Caco-2 (cell line): ENCODE measurements at regions of chr19 and their contacts with region 1.

Region 1: DNA sequence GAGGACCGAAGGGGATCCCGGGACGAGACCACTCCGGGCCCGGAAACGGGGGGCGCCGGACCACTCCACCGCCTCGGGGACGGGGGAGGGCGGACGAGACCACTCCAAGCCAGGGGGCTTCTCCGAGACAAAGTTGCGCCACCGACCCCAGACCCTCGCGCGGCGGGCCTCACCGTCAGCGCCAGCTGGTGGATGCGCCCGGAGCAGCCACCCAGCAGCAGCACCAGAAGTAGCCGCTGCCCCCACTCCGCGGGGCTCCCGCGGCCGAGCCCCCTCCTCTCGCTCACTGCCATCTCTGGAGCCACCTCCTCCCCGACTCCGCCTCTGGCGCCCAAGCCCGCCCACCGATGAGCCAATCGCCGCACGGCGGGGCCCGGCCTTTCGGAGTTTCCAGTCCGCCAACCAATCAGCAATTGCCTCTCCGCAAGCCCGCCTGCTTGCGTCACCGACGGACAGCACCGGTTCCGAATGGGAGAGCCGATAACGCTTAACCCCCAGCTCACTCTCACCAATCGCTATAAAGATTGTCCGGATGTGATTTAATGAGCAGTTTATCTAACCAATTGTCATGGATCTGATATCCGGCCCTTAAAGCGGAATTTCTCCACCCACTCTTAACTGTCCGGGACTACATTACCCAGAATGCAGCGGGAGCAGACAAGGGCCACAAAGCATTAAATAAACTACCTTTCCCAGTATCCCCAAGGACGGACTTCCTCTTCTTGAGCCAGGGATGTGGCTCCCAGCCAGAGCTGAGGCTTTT is at the start of gene GPR108:
- DNase-seq: peak; percentile 99
- H3K4me3 ChIP-seq: peak within 1 kb of the TSS; percentile 81
- H3K4me3 Mint-ChIP-seq: peak within 1 kb of the TSS; percentile 78
- H3K27ac Mint-ChIP-seq: peak within 1 kb of the TSS; percentile 99
- H3K4me1 ChIP-seq: peaks cover 20% of the 10 kb centered on the region
- H3K4me1 Mint-ChIP-seq: peaks cover 17% of the 10 kb centered on the region
- H3K27me3 ChIP-seq: no peaks in the 10 kb centered on the region
- H3K27me3 Mint-ChIP-seq: no peaks in the 10 kb centered on the region
- CTCF ChIP-seq: no peak
- total RNA-seq, gene GPR108: 48.9 and 53.6 TPM in 2 replicates

Region 2: DNA sequence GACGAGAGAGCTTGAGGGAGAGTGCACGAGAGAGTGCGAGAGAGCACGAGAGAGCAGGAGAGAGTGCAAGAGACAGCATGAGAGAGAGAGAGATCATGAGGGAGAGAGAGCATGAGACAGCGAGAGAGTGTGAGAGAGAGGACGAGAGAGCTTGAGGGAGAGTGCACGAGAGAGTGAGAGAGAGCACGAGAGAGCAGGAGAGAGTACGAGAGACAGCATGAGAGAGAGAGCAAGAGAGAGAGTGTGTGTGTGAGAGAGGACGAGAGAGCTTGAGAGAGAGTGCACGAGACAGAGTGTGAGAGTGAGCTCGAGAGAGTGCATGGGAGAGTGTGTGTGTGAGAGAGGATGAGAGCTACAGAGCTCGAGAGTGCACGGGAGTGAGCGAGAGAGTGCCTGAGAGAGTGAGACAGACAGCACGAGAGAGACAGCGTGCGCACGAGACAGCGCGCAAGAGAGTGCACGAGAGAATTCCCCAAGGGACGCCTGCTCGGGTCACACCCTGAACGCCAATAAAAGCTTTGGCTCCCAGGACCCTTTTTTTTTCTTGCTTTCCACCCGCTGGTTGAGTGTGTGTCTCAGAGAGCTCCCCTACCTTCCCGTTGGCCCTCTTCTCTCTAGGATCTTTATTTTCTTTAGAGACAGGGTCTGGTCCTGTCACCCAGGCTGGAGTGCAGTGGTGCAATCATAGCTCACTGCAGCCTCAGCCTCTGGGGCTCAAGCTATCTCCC is 150.2 kb before region 1 on chr19:
- CTCF ChIA-PET with region 1: no interaction called
- POLR2A ChIA-PET with region 1: interaction called, 14 read pairs
- intact Hi-C with region 1: no loop called
- DNase-seq: peak in 1 of 2 experiments; percentile 20
- H3K4me3 ChIP-seq: peak overlapping the region; percentile 42
- H3K4me3 Mint-ChIP-seq: peak overlapping the region; percentile 81
- H3K27ac Mint-ChIP-seq: no peak overlapping the region
- H3K4me1 ChIP-seq: no peaks in the 10 kb centered on the region
- H3K4me1 Mint-ChIP-seq: peaks cover 9% of the 10 kb centered on the region
- H3K27me3 ChIP-seq: peaks cover 2% of the 10 kb centered on the region; the same call in 1 of the 2 replicates
- H3K27me3 Mint-ChIP-seq: peaks cover 28% of the 10 kb centered on the region
- CTCF ChIP-seq: no peak

Region 3: GRCh38 chr19:6660930-6661329 is 76.5 kb before region 1 on chr19:
- CTCF ChIA-PET with region 1: interaction called, 9 read pairs
- POLR2A ChIA-PET with region 1: no interaction called
- intact Hi-C with region 1: loop called (anchors 1 kb)
- DNase-seq: peak in 1 of 2 experiments; percentile 32
- H3K4me3 ChIP-seq: no peak overlapping the region
- H3K4me3 Mint-ChIP-seq: peak overlapping the region; percentile 42
- H3K27ac Mint-ChIP-seq: no peak overlapping the region
- H3K4me1 ChIP-seq: peaks cover 17% of the 10 kb centered on the region
- H3K4me1 Mint-ChIP-seq: peaks cover 27% of the 10 kb centered on the region
- H3K27me3 ChIP-seq: no peaks in the 10 kb centered on the region
- H3K27me3 Mint-ChIP-seq: no peaks in the 10 kb centered on the region
- CTCF ChIP-seq: no peak

Region 4: DNA sequence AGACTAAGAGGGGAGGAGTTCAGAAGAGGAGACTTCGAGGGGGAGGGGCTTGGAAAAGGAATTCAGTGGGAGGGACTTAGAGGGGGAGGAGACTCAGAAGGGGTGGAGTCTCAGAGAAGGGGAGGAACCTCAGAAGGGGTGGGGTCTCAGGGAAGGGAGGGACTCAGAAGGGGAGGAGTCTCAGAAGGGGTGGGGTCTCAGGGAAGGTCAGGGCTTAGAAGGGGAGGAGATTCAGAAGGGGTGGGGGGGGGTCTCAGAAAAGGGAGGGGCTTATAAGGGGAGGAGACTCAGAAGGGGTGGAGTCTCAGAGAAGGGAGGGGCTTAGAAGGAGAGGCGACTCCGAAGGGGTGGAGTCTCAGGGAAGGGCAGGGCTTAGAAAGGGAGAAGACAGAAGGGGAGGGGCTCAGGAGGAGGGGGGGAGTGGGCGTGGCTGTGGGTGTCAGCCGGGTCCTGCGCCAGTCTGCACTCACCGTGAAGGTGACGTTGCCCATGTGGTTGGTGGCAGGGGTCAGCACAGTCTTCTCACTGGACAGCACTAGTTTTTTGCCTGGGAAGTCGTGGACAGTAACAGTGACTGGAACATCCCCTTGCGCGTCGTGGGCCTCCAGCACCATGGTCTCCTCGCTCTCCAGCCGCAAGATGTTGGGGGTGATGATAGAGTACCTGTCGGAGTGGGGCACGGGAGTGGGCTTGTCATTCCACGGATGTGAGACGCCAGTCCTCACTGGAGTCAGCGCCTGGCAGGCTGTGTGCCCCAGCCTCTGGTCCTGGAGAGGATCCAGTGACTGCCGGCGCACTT is 18.5 kb before region 1 on chr19:
- CTCF ChIA-PET with region 1: no interaction called
- POLR2A ChIA-PET with region 1: no interaction called
- intact Hi-C with region 1: no loop called
- DNase-seq: peak in 1 of 2 experiments; percentile 37
- H3K4me3 ChIP-seq: no peak overlapping the region
- H3K4me3 Mint-ChIP-seq: no peak overlapping the region
- H3K27ac Mint-ChIP-seq: no peak overlapping the region
- H3K4me1 ChIP-seq: peaks cover 11% of the 10 kb centered on the region
- H3K4me1 Mint-ChIP-seq: peaks cover 17% of the 10 kb centered on the region
- H3K27me3 ChIP-seq: no peaks in the 10 kb centered on the region
- H3K27me3 Mint-ChIP-seq: no peaks in the 10 kb centered on the region
- CTCF ChIP-seq: no peak

Region 5: DNA sequence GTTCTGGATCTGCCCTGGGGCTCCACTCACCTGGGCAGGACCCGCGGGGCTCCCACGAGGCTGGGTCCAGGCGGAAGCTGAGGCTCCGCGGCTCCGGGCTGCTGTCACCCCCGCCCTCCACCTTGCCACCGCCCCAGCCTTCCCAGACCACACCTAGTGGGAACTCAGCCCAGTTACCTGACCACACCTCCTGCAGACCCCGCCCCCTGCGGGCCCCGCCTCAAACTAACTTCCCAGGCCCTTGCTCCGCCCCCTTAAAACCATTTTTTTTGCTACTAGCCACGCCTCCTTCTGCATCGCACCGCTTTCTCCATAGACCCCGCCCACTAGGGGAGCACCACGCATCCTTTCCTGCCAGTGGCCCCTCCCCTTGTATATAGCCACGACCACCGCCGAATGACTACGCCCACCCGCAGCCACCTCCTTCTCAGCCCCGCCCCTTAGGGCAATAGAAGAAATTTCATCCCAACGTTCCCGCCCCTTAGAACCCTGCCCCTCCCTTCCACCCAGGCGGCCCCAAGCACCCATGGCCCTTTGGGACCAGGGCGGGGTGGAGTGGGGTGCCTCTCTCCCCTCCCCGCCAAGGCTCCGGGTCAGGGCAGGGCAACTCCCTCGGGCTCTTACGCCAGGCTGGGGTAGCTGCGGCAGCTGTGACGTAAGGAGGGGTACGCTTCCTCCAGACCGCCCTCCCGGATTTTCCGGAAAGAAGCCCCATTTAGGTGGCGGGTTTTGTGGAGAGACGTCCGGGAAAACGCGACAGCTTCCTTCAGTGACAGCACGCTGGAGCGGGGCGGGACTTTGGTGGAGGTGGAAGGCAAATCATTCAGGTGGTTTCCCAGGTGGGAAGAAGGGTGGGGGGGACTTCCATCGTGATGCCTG is 30.1 kb after region 1 on chr19 and contains the start of gene SH2D3A:
- CTCF ChIA-PET with region 1: interaction called, 7 read pairs
- POLR2A ChIA-PET with region 1: interaction called, 3 read pairs
- intact Hi-C with region 1: loop called (anchors 1 kb)
- DNase-seq: peak; percentile 95 to 96
- H3K4me3 ChIP-seq: peak within 1 kb of the TSS; percentile 80
- H3K4me3 Mint-ChIP-seq: peak within 1 kb of the TSS; percentile 80
- H3K27ac Mint-ChIP-seq: peak within 1 kb of the TSS; percentile 94
- H3K4me1 ChIP-seq: peaks cover 13% of the 10 kb centered on the region
- H3K4me1 Mint-ChIP-seq: peaks cover 10% of the 10 kb centered on the region
- H3K27me3 ChIP-seq: no peaks in the 10 kb centered on the region
- H3K27me3 Mint-ChIP-seq: no peaks in the 10 kb centered on the region
- CTCF ChIP-seq: no peak
- total RNA-seq, gene SH2D3A: 20.5 and 24.5 TPM in 2 replicates